ENCODE measurements at regions of chr9 and their contacts with region 1.

Region 1: DNA sequence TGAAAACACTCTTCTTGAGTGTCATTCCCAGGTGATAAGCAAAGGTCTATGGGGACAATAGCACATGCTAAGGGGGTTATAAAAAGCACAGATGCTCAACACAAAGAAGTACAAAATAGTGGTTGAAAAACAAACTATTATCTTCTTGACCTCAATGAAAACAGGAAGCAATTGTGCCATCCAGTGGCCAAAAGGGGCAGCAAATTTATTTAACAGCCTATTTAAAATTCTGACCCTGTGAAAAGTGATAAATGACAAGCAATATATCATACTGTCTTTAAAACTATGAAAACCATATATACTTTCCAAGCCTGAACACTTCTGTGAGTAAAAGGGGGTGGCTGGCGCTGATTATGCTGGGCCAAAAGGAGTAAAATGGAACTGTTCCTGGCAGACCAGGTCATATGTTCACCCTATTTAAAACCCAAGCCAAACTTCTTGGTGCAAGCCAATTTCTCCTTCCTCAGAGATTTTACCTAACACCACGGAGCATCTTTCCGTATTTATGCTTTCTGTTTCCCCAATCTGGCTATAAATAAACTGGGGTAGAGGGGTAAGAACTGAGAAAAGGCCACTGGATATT is 29.7 kb downstream of the TEX10 start:
- DNase-seq: peak; percentile 27
- H3K4me3 ChIP-seq: no peak overlapping the region; a peak in 1 of 4 replicates
- H3K27ac ChIP-seq: no peak overlapping the region
- H3K4me1 ChIP-seq: no peaks in the 10 kb centered on the region
- H3K27me3 ChIP-seq: no peaks in the 10 kb centered on the region
- CTCF ChIP-seq: peak; percentile 87
- EP300 ChIP-seq: no peak
- RAD21 ChIP-seq: peak; percentile 71

Region 2: GRCh38 chr9:100028201-100028784 is 294.8 kb before region 1 on chr9:
- CTCF ChIA-PET with region 1: interaction called, 12 read pairs
- POLR2A ChIA-PET with region 1: no interaction called
- DNase-seq: peak; percentile 65
- H3K4me3 ChIP-seq: no peak overlapping the region; a peak in 1 of 4 replicates
- H3K27ac ChIP-seq: no peak overlapping the region
- H3K4me1 ChIP-seq: no peaks in the 10 kb centered on the region; a peak in 1 of 4 replicates
- H3K27me3 ChIP-seq: no peaks in the 10 kb centered on the region
- CTCF ChIP-seq: peak; percentile 97
- EP300 ChIP-seq: no peak
- RAD21 ChIP-seq: peak; percentile 96

Region 3: DNA sequence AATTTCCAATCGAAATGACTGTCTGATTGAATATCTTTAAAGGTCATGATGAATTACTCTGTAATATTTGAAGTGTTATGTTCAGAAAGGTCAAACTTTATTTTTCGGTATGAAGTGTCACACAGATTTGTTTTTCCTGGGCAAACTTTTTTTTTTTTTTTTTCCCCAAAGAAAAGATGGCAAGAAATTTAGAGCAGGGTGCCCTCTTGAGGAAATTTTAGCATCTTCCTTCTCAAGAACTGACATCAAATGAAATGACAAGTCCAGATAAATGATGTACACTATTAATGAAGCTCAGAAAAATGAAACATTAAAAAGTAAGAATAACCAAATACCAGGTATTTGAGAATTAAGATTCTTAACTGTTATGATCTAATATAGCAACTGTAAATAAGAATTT is 100.4 kb before region 1 on chr9:
- CTCF ChIA-PET with region 1: no interaction called
- POLR2A ChIA-PET with region 1: no interaction called
- DNase-seq: peak; percentile 20
- H3K4me3 ChIP-seq: no peak overlapping the region
- H3K27ac ChIP-seq: peak overlapping the region in 1 of 2 experiments; percentile 0; a peak in 1 of 4 replicates
- H3K4me1 ChIP-seq: no peaks in the 10 kb centered on the region
- H3K27me3 ChIP-seq: no peaks in the 10 kb centered on the region
- CTCF ChIP-seq: peak; percentile 72
- EP300 ChIP-seq: no peak
- RAD21 ChIP-seq: peak; percentile 70

Region 4: DNA sequence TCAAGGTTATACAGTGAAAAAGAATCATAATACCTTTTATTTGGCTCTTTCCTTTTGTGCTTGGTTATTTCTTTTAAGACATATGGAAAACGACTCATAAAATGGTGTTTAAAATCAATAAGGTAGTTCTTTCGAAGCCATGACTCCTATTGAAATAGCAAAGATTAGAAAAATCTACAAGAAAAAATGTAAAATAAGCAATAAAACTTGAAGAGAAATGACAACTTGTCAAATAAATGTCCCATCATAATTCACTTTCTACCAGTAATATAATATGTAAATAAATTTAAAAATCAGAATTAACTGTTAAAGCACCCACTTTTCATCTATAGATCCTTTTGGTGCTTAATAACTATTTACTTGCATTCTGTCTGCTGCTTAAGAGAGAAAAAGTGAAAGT is 17.2 kb after region 1 on chr9:
- CTCF ChIA-PET with region 1: interaction called, 45 read pairs
- POLR2A ChIA-PET with region 1: no interaction called
- DNase-seq: no peak
- H3K4me3 ChIP-seq: no peak overlapping the region
- H3K27ac ChIP-seq: no peak overlapping the region
- H3K4me1 ChIP-seq: no peaks in the 10 kb centered on the region
- H3K27me3 ChIP-seq: no peaks in the 10 kb centered on the region
- CTCF ChIP-seq: no peak
- EP300 ChIP-seq: no peak
- RAD21 ChIP-seq: no peak

Region 5: GRCh38 chr9:100352727-100353505 is 29.9 kb after region 1 on chr9 and contains the start of gene TEX10:
- CTCF ChIA-PET with region 1: interaction called, 22 read pairs
- POLR2A ChIA-PET with region 1: no interaction called
- DNase-seq: peak; percentile 99
- H3K4me3 ChIP-seq: peak within 1 kb of the TSS; percentile 97
- H3K27ac ChIP-seq: peak within 1 kb of the TSS; percentile 84 to 85
- H3K4me1 ChIP-seq: peaks cover 11 to 17% of the 10 kb centered on the region in 2 experiments; a peak in 3 of 4 replicates
- H3K27me3 ChIP-seq: no peaks in the 10 kb centered on the region
- CTCF ChIP-seq: no peak
- EP300 ChIP-seq: no peak
- RAD21 ChIP-seq: no peak
- polyA plus RNA-seq, gene TEX10: 12.7 and 16.7 TPM in 2 replicates

Region 6: DNA sequence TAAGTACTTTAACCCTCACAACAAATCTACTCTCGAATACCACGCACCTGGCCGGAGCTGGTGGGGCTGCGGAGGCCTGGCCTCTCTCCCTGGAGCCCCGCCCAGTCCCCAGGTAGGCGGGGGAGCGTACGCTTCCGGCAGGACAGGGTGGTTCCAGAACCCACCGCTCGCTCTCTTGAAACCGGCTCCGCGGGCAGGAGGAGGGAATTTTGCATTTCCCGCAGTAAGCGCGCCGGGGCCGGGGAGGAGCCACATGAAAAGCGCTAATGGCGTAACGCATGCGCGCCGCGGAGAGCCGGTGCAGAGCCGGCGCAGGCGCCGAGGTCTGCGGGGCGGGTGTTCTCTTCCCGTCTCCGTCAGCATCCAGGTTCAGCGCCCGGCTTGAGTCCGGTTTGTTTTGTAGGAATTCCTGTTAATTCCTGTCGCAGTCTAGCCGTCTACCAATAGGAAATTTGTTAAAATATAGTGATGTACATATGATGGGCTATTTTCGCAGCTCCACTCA is 275.6 kb after region 1 on chr9:
- CTCF ChIA-PET with region 1: interaction called, 13 read pairs
- POLR2A ChIA-PET with region 1: no interaction called
- DNase-seq: peak; percentile 86
- H3K4me3 ChIP-seq: peak overlapping the region; percentile 63 to 66
- H3K27ac ChIP-seq: peak overlapping the region in 1 of 2 experiments; percentile 68; a peak in 2 of 4 replicates
- H3K4me1 ChIP-seq: peaks cover 0 to 9% of the 10 kb centered on the region in 2 experiments; a peak in 1 of 4 replicates
- H3K27me3 ChIP-seq: no peaks in the 10 kb centered on the region
- CTCF ChIP-seq: no peak
- EP300 ChIP-seq: no peak
- RAD21 ChIP-seq: no peak

Measured in SK-N-SH (cell line).